HEK293T (cell line): ENCODE measurements at regions of chr3 and their contacts with region 1.

Region 1: GRCh38 chr3:44648564-44649229 is at the start of gene ZNF35:
- DNase-seq: peak; percentile 80

Region 2: DNA sequence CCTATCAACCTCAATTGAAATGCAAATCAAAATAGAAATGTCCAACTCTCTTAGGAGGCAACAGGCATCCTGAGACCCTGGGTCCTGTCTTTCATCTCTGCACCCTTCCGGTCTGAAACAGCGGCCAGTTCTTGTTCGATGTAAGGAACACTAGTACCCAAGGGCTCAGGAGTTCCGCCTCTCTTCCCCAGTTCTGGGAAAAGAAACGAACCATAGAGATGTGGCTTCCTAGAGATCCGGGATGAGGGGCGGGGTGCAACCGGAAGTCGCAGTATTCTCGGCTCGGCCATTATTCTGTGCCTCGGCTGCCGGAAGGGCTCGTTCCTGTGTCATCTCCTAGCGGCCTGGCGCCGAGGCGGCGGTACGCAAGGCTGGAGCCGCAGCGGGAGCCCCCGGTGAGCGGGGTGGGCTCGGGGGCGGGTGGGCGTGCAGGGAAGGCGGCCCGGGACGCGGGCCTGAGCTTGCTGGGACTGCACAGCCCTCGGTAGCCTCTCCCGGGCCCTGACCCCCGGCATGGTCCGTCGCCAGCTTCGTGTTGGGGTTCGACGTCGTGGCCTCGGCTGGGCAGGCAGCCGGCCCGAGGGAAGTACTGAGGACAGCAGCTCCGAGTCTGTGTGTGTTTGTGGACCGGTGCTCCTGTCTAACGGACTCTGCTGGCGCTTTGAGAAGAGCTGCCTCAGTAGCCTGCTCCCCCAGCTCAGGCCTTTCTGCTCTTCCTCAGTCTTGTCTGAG is 23.8 kb before region 1 on chr3 and contains the start of gene ZNF197:
- CTCF ChIA-PET with region 1: no interaction called
- POLR2A ChIA-PET with region 1: interaction called, 22 read pairs
- DNase-seq: peak; percentile 82

Region 3: GRCh38 chr3:44661189-44661588 is 12.5 kb after region 1 on chr3:
- CTCF ChIA-PET with region 1: no interaction called
- POLR2A ChIA-PET with region 1: no interaction called
- DNase-seq: no peak